Naive thymus-derived CD4-positive, alpha-beta T cell (primary cell): ENCODE measurements at regions of chr10 and their contacts with region 1.

Region 1: GRCh38 chr10:6151087-6151977 is 51.4 kb upstream of the PFKFB3 start:
- DNase-seq: peak; percentile 26 to 58 (median 53)
- ATAC-seq: peak; percentile 79
- H3K4me3 ChIP-seq: peak overlapping the region; percentile 28
- H3K4me3 Mint-ChIP-seq: peak overlapping the region; percentile 70 to 85 (median 80)
- H3K27ac ChIP-seq: peak overlapping the region; percentile 25
- H3K27ac Mint-ChIP-seq: peak overlapping the region; percentile 68 to 92 (median 85)
- H3K4me1 ChIP-seq: peaks cover 1 to 32% of the 10 kb centered on the region in 2 donors
- H3K4me1 Mint-ChIP-seq: peaks cover 49 to 68% (median 59%) of the 10 kb centered on the region in 7 donors
- H3K27me3 ChIP-seq: no peaks in the 10 kb centered on the region
- H3K27me3 Mint-ChIP-seq: no peaks in the 10 kb centered on the region

Region 2: DNA sequence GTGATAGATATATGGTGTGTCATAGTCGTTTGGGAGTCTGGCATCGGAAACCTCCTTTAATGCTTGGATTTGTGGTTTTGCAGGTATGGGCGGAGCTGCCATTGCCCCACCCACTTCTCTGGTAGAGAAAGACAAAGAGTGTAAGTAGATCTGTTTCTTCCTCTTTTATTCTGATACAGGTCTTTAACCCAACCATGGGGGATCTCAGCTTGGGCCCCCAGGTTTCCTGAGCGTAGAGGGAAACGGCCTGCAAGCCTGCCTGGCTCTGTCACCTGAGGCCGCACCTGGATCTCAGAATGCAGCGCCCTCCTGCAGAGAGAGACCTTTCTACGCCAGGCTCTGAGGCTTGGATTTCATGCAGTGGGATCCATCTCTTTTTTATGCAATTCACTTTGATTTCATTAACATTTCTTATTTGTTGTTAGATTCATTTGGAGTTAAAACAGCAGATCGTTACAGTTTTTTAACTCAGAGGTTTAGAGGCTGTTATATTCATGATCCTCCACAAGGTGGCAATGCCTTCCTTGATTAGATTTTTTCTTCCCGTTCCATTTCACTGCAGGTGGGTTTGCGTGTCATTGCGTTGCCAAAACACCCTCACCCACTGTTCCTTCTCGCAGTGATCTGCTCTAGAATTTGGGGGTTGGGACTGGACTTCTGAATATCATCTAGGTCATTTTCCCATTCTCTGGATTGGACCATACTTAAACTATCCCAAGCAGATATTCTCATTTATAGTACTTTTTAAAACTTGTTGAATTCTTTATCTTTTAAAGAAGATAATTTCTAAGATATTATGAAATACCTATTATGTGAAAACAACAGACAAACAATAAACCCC is 42.5 kb before region 1 on chr10:
- CTCF ChIA-PET with region 1: interaction called, 4 read pairs
- POLR2A ChIA-PET with region 1: interaction called, 3 read pairs
- intact Hi-C with region 1: loop called (anchors 1 kb)
- DNase-seq: peak in 7 of 9 donors; percentile 38 to 66 (median 62)
- ATAC-seq: peak; percentile 85
- H3K4me3 ChIP-seq: no peak overlapping the region
- H3K4me3 Mint-ChIP-seq: peak overlapping the region in 3 of 10 donors; percentile 2 to 37 (median 29)
- H3K27ac ChIP-seq: no peak overlapping the region
- H3K27ac Mint-ChIP-seq: peak overlapping the region; percentile 37 to 91 (median 80)
- H3K4me1 ChIP-seq: peaks cover 10 to 11% of the 10 kb centered on the region in 2 donors
- H3K4me1 Mint-ChIP-seq: peaks cover 11 to 38% (median 23%) of the 10 kb centered on the region in 7 donors
- H3K27me3 ChIP-seq: no peaks in the 10 kb centered on the region
- H3K27me3 Mint-ChIP-seq: no peaks in the 10 kb centered on the region

Region 3: DNA sequence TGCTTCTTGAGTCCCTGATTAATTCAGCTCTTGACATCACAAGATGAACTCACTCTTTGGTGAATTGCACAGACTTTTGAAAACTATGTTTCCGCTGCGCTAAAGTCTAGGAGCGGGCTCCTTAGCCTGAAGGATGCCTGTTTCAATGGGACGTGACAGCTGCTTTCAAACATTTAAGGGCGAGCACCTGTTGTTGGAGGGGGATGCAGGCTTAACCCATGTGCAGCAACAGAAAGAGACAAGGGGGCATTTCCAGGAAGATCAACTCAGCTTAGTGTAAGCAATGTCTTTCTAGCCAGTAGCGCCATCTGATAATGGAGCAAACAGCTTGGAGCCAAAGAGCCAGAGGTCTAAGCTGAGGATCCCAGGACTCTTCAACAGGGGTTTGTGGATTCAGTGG is 43.0 kb after region 1 on chr10:
- CTCF ChIA-PET with region 1: no interaction called
- POLR2A ChIA-PET with region 1: no interaction called
- intact Hi-C with region 1: no loop called
- DNase-seq: no peak
- ATAC-seq: no peak
- H3K4me3 ChIP-seq: no peak overlapping the region
- H3K4me3 Mint-ChIP-seq: no peak overlapping the region
- H3K27ac ChIP-seq: no peak overlapping the region
- H3K27ac Mint-ChIP-seq: peak overlapping the region in 1 of 9 donors; percentile 47
- H3K4me1 ChIP-seq: peaks cover 0 to 5% of the 10 kb centered on the region in 2 donors
- H3K4me1 Mint-ChIP-seq: peaks cover 22 to 51% (median 32%) of the 10 kb centered on the region in 7 donors
- H3K27me3 ChIP-seq: no peaks in the 10 kb centered on the region
- H3K27me3 Mint-ChIP-seq: no peaks in the 10 kb centered on the region

Region 4: DNA sequence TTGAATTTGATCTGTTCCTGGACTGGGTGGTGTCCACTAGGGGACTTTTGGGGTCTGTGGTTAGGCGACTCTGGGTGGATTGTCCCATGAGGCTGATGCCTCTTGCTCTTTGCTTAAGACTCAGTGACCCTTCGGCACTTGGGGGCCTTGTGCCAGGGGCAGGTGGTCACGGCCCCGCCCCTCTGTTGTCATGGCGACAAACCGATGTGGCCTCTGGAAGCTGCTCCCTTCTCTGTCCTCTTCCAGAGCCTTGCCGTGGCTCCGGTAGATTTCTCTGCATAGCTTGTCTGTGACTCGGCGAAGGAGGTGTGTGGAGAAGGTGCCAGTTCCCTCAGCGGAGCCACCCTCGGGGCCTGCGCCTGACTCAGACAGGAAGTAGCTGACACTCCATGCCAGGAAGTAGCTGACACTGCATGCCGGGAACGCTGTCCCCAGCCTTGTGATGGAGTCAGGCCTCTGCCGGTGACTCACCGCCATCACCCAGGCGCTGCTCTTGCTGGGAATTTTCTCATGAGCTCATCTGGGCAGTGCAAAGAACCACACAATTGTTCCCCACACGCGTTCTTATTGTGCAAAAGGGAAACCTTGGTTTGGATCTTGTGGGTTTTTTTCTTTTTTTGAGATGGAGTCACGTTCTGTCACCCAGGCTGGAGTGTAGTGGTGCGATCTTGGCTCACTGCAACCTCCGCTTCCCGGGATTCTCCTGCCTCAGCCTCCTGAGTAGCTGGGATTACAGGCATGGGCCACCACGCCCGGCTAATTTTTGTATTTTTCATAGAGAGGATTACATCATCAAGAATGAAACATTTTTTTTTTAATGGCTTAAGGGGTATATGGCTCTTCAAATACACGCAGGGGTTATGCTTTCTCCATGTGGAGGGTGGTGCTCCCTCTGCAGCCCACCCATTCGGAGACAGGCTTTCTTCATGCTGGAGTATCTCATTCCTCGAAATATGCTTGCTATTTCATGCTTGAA is 124.0 kb after region 1 on chr10:
- CTCF ChIA-PET with region 1: no interaction called
- POLR2A ChIA-PET with region 1: no interaction called
- intact Hi-C with region 1: no loop called
- DNase-seq: peak; percentile 44 to 84 (median 59)
- ATAC-seq: peak; percentile 92
- H3K4me3 ChIP-seq: peak overlapping the region; percentile 30
- H3K4me3 Mint-ChIP-seq: peak overlapping the region; percentile 32 to 82 (median 64)
- H3K27ac ChIP-seq: no peak overlapping the region
- H3K27ac Mint-ChIP-seq: peak overlapping the region; percentile 74 to 99 (median 93)
- H3K4me1 ChIP-seq: peaks cover 6 to 26% of the 10 kb centered on the region in 2 donors
- H3K4me1 Mint-ChIP-seq: peaks cover 16 to 64% (median 21%) of the 10 kb centered on the region in 7 donors
- H3K27me3 ChIP-seq: no peaks in the 10 kb centered on the region
- H3K27me3 Mint-ChIP-seq: no peaks in the 10 kb centered on the region

Region 5: GRCh38 chr10:6314620-6315205 is 163.4 kb after region 1 on chr10:
- CTCF ChIA-PET with region 1: no interaction called
- POLR2A ChIA-PET with region 1: no interaction called
- intact Hi-C with region 1: no loop called
- DNase-seq: no peak
- ATAC-seq: no peak
- H3K4me3 ChIP-seq: no peak overlapping the region
- H3K4me3 Mint-ChIP-seq: no peak overlapping the region
- H3K27ac ChIP-seq: no peak overlapping the region
- H3K27ac Mint-ChIP-seq: no peak overlapping the region
- H3K4me1 ChIP-seq: no peaks in the 10 kb centered on the region
- H3K4me1 Mint-ChIP-seq: peaks cover 0 to 19% (median 0%) of the 10 kb centered on the region in 7 donors
- H3K27me3 ChIP-seq: no peaks in the 10 kb centered on the region
- H3K27me3 Mint-ChIP-seq: no peaks in the 10 kb centered on the region